ENCODE measurements at regions of chr11 and their contacts with region 1.

Region 1: GRCh38 chr11:8099291-8099899 is 18.4 kb downstream of the TUB start:
- DNase-seq: peak; percentile 91

Region 2: GRCh38 chr11:8003187-8003586 is 96.2 kb before region 1 on chr11:
- intact Hi-C with region 1: loop called in 1 of 2 experiments (anchors 5 kb)
- DNase-seq: no peak

Region 3: DNA sequence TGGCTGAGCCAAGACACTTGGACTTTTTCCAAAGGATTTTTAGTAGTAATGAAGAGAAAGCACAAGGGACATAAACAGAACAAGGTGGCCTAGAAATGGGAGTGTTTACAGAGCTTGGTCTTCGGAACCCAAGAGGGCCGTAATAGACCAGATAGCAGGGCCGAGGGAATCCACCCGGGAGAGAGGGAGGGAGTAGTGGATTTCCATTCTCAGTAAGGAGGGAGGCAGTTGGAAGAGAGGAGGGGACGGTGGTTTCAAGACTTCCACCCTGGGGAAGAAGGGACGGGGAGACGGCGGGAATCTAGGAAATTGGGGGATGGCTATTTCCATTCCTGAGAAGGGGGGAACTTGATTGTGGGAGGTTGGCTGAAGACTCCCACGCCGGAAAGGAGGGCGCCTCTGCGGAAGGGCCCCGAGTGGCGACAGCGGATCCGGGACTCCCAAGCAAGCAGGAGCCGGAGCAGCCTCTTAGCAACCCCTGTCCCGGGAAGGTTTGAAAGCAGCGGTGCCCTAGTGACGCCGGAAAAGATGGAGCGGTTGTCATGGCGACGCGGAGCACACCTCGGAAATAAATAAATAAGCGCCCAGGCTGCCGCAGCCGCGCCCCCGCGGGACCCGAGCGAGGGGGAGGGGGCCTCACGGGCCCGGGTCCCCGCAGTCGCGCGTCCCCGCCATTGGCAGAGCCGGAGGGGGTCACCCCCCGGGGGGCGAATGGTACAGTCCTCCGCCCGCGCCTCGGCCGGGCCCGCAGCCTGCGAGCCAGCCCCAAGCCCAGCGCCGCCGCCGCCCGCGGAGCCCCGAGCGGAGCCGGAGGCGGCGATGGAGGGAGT is 80.7 kb before region 1 on chr11:
- intact Hi-C with region 1: loop called in 1 of 2 experiments (anchors 5 kb)
- DNase-seq: peak; percentile 90

Region 4: GRCh38 chr11:8033305-8034105 is 65.9 kb before region 1 on chr11:
- intact Hi-C with region 1: loop called in 1 of 2 experiments (anchors 5 kb)
- DNase-seq: peak; percentile 91

Measured in posterior vena cava (tissue), 2 donors.